Cardiac septum (tissue), 1 donor: ENCODE measurements at regions of chr5 and their contacts with region 1.

Region 1: DNA sequence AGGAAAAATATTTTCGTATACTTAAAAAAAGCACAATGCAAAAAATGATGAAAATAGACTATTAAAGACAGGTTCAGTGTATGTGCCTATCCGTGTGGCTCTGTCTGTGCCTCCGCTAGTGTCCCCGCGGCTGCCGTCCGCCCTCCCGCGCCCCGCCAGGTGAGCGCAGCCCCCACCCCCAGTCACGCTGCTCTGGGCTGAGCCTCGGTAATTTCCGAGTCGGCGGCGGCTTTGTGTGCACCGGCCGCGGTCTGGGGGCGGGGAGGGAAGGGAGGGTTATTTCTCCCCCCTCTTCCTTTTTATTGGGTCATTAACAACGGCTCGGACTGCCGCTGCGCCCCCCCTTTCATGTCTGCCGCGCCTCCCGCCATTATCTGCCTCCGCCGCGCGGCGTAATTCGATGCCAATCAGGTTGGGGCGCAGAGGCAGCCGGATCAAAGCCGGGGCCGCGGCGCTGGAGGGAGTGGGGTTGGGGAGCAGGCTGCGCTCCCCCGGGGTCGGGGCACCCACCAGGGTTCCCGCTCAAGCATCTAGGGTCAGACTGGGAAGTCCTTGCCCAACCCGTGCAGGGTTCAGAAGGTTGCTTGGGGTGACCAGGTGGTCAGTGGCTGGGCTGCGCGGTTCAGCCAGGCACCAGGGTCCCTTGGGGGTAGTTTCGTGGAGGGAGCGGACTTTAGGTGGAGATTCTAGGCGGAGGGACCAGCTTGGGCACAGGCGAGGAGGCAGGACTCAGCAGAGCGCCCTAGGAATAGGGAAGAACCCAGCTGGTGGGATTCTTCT is 39.5 kb upstream of the PSD2 start:
- DNase-seq: no peak

Region 2: DNA sequence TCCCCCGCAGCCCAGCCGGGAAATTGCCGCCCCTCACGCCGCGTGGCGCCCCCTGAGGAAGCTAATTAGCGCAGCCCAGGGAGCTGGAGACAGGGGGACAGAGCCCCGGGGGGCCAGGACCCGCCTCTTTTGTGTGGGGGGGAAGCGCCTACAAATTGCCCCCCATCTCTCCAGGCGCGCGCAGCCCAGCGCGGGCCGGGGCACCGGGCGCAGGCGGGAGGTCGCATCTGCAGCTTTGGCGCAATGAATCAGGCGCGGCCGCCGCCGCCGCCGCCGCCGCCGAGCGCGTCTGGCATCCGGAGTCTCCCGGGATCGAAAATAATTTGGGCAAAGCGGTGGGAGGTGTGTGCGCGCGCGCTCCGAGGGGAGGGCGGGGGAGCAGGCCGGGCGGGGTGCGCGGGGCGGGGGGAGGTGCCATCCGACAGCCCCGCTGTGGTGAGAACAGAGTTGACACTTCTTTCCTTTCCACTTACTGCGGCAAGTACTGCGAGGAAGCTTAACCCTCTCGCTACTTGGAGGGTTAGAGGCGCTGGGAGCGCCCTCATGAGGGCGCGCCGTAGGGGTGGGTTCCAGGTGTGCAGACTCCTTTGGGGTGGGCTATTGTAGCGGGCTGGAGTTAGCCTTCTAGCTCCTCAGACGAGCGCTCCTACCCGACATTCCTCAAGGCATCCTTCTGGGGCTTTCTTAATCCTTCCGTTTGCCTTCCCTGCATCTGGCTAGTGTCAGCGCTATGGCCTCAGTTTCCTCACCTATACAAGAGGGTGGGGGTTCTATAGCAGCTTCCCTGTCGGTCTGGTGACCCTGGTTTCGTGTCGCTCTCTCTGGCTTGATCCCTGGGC is 44.8 kb before region 1 on chr5:
- intact Hi-C with region 1: loop called (anchors 5 kb)
- DNase-seq: no peak

Region 3: GRCh38 chr5:139725073-139725830 is 30.8 kb before region 1 on chr5:
- intact Hi-C with region 1: no loop called
- DNase-seq: no peak